ENCODE measurements at regions of chr7 and their contacts with region 1.

Region 1: DNA sequence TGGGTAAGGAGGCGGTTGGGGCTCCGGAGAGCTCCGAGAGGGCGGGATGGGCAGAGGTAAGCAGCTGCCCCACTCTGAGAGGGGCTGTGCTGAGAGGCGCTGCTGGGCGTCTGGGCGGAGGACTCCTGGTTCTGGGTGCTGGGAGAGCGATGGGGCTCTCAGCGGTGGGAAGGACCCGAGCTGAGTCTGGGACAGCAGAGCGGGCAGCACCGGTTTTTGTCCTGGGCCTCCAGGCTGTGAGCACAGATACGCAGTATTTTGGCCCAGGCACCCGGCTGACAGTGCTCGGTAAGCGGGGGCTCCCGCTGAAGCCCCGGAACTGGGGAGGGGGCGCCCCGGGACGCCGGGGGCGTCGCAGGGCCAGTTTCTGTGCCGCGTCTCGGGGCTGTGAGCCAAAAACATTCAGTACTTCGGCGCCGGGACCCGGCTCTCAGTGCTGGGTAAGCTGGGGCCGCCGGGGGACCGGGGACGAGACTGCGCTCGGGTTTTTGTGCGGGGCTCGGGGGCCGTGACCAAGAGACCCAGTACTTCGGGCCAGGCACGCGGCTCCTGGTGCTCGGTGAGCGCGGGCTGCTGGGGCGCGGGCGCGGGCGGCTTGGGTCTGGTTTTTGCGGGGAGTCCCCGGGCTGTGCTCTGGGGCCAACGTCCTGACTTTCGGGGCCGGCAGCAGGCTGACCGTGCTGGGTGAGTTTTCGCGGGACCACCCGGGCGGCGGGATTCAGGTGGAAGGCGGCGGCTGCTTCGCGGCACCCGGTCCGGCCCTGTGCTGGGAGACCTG is 26.0 kb downstream of the PRSS2 start:
- DNase-seq: peak; percentile 58
- ATAC-seq: no peak
- H3K4me3 Mint-ChIP-seq: peak overlapping the region; percentile 94
- H3K27ac Mint-ChIP-seq: peak overlapping the region; percentile 99
- H3K4me1 Mint-ChIP-seq: peaks cover 67% of the 10 kb centered on the region
- H3K27me3 Mint-ChIP-seq: no peaks in the 10 kb centered on the region

Region 2: GRCh38 chr7:142535123-142535779 is 261.5 kb before region 1 on chr7:
- POLR2A ChIA-PET with region 1: interaction called, 14 read pairs
- DNase-seq: peak; percentile 73
- ATAC-seq: peak; percentile 91
- H3K4me3 Mint-ChIP-seq: peak overlapping the region; percentile 76
- H3K27ac Mint-ChIP-seq: peak overlapping the region; percentile 88
- H3K4me1 Mint-ChIP-seq: peaks cover 22% of the 10 kb centered on the region
- H3K27me3 Mint-ChIP-seq: peaks cover 2% of the 10 kb centered on the region

Region 3: DNA sequence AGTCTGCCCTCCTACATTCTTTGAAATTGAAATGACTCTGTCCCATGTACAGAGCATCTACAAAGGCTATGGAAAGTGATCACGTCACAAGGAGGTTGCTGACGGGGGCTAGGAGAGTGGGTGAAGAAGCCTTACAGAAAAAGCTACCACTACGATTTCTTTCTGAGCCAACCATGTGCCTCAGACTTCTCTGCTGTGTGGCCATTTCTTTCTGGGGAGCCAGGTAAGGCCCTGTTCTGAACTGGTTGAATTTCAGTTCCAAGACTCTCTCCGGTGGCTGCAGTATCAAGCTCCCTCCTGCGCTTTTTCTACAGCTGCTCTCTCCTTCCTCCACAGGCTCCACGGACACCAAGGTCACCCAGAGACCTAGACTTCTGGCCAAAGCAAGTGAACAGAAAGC is 160.0 kb before region 1 on chr7:
- POLR2A ChIA-PET with region 1: interaction called, 16 read pairs
- DNase-seq: no peak
- ATAC-seq: peak; percentile 61
- H3K4me3 Mint-ChIP-seq: peak overlapping the region; percentile 94
- H3K27ac Mint-ChIP-seq: peak overlapping the region; percentile 99
- H3K4me1 Mint-ChIP-seq: peaks cover 13% of the 10 kb centered on the region
- H3K27me3 Mint-ChIP-seq: peaks cover 6% of the 10 kb centered on the region

Region 4: DNA sequence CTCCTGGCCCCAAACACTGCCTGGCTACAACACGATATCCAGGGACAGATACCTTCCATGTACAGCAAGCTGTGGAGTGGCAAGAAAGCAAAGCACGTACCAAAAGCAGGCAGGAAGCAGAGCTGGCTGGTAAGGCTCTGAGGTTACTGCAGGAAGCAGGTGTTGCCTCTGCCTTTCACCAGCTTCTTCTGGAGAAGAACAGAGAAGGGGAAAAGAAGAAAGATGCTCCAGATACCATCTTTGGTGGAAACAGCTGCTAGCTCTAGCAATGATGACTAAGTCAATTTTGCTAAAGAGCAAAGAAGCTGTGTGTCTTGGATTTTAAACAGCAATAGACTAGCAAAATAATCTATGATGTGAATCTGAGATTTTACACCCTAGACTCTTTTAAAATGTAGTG is 82.4 kb before region 1 on chr7:
- POLR2A ChIA-PET with region 1: interaction called, 16 read pairs
- DNase-seq: no peak
- ATAC-seq: peak; percentile 40
- H3K4me3 Mint-ChIP-seq: peak overlapping the region; percentile 61
- H3K27ac Mint-ChIP-seq: peak overlapping the region; percentile 85
- H3K4me1 Mint-ChIP-seq: peaks cover 63% of the 10 kb centered on the region
- H3K27me3 Mint-ChIP-seq: no peaks in the 10 kb centered on the region

Region 5: GRCh38 chr7:142782922-142783900 is 13.6 kb before region 1 on chr7:
- POLR2A ChIA-PET with region 1: interaction called, 484 read pairs
- DNase-seq: peak; percentile 73
- ATAC-seq: peak; percentile 49
- H3K4me3 Mint-ChIP-seq: peak overlapping the region; percentile 81
- H3K27ac Mint-ChIP-seq: peak overlapping the region; percentile 87
- H3K4me1 Mint-ChIP-seq: peaks cover 8% of the 10 kb centered on the region
- H3K27me3 Mint-ChIP-seq: no peaks in the 10 kb centered on the region